PC-3 (cell line): ENCODE measurements at regions of chr3 and their contacts with region 1.

Region 1: DNA sequence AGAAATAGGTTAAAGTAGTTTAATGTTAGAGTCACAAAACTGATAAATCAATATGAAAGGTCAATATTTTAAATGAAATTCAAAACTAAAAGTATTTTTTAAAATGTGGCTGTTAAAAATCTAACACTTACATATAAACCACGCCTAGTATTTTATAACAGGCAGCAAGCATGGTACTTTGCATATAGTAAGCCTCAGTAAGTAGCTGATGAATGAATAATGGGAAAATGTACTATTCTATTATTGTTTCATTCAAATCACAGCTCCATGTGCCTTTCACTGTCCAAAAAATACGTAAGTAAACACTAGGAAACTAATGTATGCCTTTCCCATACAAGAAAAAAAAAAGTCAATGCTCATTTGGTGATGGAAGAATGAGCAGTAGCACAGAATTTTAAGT is 17.8 kb downstream of the CCDC39 start:
- DNase-seq: no peak
- ATAC-seq: no peak
- H3K4me3 ChIP-seq: no peak overlapping the region
- H3K27ac ChIP-seq: no peak overlapping the region
- H3K4me1 ChIP-seq: no peaks in the 10 kb centered on the region
- H3K27me3 ChIP-seq: peaks cover 41% of the 10 kb centered on the region
- CTCF ChIP-seq: no peak

Region 2: DNA sequence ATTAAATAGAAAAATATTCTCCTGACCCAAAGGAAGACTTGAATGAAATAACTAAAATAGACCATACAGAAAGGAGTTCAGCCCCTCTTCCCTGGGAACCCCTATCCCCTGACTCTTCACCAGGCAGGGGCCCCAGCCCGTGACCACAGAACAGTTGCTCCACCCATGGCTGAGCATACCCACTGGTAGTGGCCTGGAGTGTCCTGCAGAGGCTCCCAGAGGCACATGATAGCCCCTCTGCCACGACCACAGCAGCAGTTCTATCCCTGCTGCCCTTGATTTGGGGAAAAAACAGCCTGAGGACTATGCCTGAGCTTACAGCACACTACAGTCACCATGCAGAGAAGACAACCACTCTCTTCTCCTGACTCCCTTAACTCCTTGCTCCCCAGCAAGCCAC is 27.7 kb before region 1 on chr3:
- CTCF ChIA-PET with region 1: no interaction called
- POLR2A ChIA-PET with region 1: no interaction called
- intact Hi-C with region 1: loop called (anchors 5 kb)
- DNase-seq: no peak
- ATAC-seq: peak; percentile 35; the same call in 1 of the 2 replicates
- H3K4me3 ChIP-seq: no peak overlapping the region
- H3K27ac ChIP-seq: no peak overlapping the region
- H3K4me1 ChIP-seq: no peaks in the 10 kb centered on the region
- H3K27me3 ChIP-seq: 0 out of 2 replicates have a peak, but pooled peaks cover under 1% of the 10 kb centered on the region
- CTCF ChIP-seq: no peak